AG04449 (cell line): ENCODE measurements at regions of chr6 and their contacts with region 1.

Region 1: GRCh38 chr6:31739639-31740396 is at the start of gene MSH5:
- DNase-seq: peak; percentile 91
- H3K4me3 ChIP-seq: peak within 1 kb of the TSS; percentile 95
- CTCF ChIP-seq: no peak

Region 2: GRCh38 chr6:31752739-31753319 is 13.0 kb after region 1 on chr6:
- CTCF ChIA-PET with region 1: interaction called, 7 read pairs
- POLR2A ChIA-PET with region 1: interaction called, 15 read pairs
- DNase-seq: no peak
- H3K4me3 ChIP-seq: no peak overlapping the region
- CTCF ChIP-seq: no peak